Tibial artery (tissue), 4 donors: ENCODE measurements at regions of chr4 and their contacts with region 1.

Region 1: GRCh38 chr4:121564840-121565375 is 131.9 kb downstream of the ANXA5 start:
- DNase-seq: no peak
- H3K4me3 ChIP-seq: no peak overlapping the region
- H3K27ac ChIP-seq: no peak overlapping the region
- H3K4me1 ChIP-seq: peaks cover 0 to 6% (median 0%) of the 10 kb centered on the region in 4 donors
- H3K27me3 ChIP-seq: no peaks in the 10 kb centered on the region
- CTCF ChIP-seq: no peak

Region 2: GRCh38 chr4:121472937-121473721 is 91.8 kb before region 1 on chr4:
- intact Hi-C with region 1: no loop called
- DNase-seq: no peak
- H3K4me3 ChIP-seq: no peak overlapping the region
- H3K27ac ChIP-seq: no peak overlapping the region
- H3K4me1 ChIP-seq: no peaks in the 10 kb centered on the region
- H3K27me3 ChIP-seq: no peaks in the 10 kb centered on the region
- CTCF ChIP-seq: no peak

Region 3: DNA sequence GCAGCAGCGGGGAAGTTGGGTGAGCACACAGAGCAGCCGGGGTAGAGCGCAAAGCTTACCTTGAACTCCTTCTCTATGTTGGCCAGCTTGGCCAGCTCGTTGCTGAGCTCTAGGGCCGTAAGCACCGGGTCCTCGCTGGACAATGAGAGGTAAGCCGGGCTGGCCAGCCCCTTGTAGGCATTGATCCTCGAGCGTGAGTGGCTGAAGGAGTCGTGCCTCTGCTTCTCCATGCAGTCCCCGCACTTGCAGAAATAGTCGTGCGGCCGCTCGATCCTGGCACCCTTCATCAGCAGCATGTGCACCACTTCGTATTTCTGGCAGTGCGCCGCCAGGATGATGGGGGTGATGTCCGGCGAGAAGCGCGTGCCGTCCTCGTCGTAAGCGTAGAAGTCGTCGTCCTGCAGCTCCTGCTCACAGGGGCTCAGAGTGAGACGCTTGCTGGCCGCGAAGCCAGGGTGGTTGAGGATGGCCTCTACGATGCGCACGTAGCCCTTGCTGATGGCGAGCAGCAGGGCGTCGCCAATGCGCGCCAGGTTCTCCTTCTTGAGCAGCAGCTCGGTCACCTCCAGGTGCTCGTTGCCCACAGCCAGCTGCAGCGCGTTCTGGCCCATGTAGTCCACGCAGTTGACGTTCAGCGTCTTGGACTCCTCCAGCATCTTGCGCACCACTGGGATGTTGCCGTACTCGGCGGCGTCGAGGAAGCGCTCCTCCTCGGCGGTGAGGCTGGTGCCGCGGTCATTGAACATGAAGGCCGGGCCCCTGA is 367.5 kb after region 1 on chr4:
- intact Hi-C with region 1: no loop called
- DNase-seq: no peak
- H3K4me3 ChIP-seq: no peak overlapping the region
- H3K27ac ChIP-seq: no peak overlapping the region
- H3K4me1 ChIP-seq: no peaks in the 10 kb centered on the region
- H3K27me3 ChIP-seq: no peaks in the 10 kb centered on the region
- CTCF ChIP-seq: no peak

Region 4: DNA sequence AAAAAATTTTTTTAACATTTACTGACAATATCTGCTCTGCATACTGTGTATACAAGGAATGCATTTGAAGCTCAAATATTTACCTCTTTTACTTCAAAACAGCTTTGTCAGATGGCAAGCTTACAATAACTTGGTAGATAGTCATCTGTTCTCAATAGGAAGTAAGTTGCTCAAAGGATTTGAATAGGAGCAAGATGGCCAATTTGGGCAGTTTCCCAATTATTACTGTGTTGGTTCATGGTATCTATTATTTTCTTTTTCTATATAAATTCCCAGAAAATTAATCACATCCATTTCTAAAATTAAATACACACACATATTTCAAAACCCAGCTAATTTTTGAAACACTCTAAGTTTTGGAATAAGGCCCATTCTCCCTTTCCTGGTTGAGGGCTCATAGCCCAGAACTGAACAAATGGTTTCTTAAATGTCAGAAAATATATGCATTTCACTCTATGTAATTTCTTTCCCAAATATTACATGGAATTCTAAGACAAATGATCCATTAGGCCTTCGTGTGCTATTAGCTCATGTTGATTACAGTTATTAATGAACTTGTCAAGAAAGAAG is 527.0 kb after region 1 on chr4:
- intact Hi-C with region 1: loop called (anchors 5 kb)
- DNase-seq: no peak
- H3K4me3 ChIP-seq: no peak overlapping the region
- H3K27ac ChIP-seq: no peak overlapping the region
- H3K4me1 ChIP-seq: peaks cover 0 to 2% (median under 1%) of the 10 kb centered on the region in 4 donors
- H3K27me3 ChIP-seq: no peaks in the 10 kb centered on the region
- CTCF ChIP-seq: no peak